ENCODE measurements at regions of chr20 and their contacts with region 1.

Region 1: GRCh38 chr20:19913927-19914614 is 103.1 kb upstream of the NAA20 start:
- DNase-seq: peak; percentile 97
- H3K4me3 ChIP-seq: no peak overlapping the region
- H3K27ac ChIP-seq: peak overlapping the region; percentile 94
- H3K4me1 ChIP-seq: peaks cover 35% of the 10 kb centered on the region
- H3K27me3 ChIP-seq: no peaks in the 10 kb centered on the region
- CTCF ChIP-seq: no peak

Region 2: GRCh38 chr20:19213946-19214490 is 700.1 kb before region 1 on chr20:
- CTCF ChIA-PET with region 1: no interaction called
- dilution Hi-C with region 1: no loop called
- in situ Hi-C with region 1: no loop called
- intact Hi-C with region 1: no loop called
- DNase-seq: no peak
- H3K4me3 ChIP-seq: no peak overlapping the region
- H3K27ac ChIP-seq: no peak overlapping the region
- H3K4me1 ChIP-seq: peaks cover 2% of the 10 kb centered on the region
- H3K27me3 ChIP-seq: peaks cover 30% of the 10 kb centered on the region
- CTCF ChIP-seq: no peak

Region 3: DNA sequence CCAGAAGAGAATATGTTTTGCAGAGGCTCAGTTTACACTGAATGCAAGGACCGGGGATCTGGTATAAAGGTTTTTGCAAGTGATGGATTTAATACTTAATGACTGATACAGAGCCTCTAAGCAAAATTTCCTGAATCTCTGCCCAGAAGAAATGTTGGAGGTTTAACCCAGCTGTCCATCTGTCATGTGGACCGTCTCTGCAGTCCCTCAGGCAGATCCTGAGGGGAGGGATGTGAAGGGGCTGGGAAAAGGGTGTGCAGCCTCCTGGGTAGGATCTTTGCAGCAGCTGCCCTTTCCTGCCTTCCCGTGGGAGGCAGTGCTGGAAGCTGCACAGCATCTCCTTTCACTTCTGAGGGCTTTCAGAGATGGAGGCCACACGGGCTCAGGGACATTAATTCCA is 494.7 kb before region 1 on chr20:
- CTCF ChIA-PET with region 1: no interaction called
- dilution Hi-C with region 1: no loop called
- in situ Hi-C with region 1: no loop called
- intact Hi-C with region 1: no loop called
- DNase-seq: no peak
- H3K4me3 ChIP-seq: no peak overlapping the region
- H3K27ac ChIP-seq: no peak overlapping the region
- H3K4me1 ChIP-seq: no peaks in the 10 kb centered on the region
- H3K27me3 ChIP-seq: no peaks in the 10 kb centered on the region
- CTCF ChIP-seq: no peak

Region 4: GRCh38 chr20:19571996-19572395 is 342.1 kb before region 1 on chr20:
- CTCF ChIA-PET with region 1: no interaction called
- dilution Hi-C with region 1: no loop called
- in situ Hi-C with region 1: no loop called
- intact Hi-C with region 1: no loop called
- DNase-seq: no peak
- H3K4me3 ChIP-seq: no peak overlapping the region
- H3K27ac ChIP-seq: no peak overlapping the region
- H3K4me1 ChIP-seq: no peaks in the 10 kb centered on the region
- H3K27me3 ChIP-seq: no peaks in the 10 kb centered on the region
- CTCF ChIP-seq: no peak

Region 5: DNA sequence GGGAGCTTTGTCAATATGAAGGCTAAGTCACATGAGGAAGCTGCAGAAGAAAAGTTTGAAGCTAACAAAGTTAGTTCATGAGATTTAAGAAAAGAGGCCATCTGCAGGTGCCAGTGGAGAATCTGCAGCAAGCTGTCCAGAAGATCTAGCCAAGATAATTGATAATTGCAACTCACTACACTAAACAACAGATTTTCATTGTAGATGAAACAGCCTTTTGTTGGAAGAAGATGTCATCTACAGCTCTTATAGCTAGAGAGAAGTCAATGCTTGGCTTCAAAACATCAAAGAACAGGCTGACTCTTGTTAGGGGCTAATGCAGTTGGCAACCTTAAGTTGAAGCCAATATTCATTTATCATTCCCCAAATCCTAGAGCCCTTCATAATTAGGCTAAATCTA is 72.3 kb before region 1 on chr20:
- CTCF ChIA-PET with region 1: no interaction called
- dilution Hi-C with region 1: no loop called
- in situ Hi-C with region 1: no loop called
- intact Hi-C with region 1: loop called (anchors 2 kb)
- DNase-seq: no peak
- H3K4me3 ChIP-seq: no peak overlapping the region
- H3K27ac ChIP-seq: no peak overlapping the region
- H3K4me1 ChIP-seq: peaks cover 5% of the 10 kb centered on the region
- H3K27me3 ChIP-seq: no peaks in the 10 kb centered on the region
- CTCF ChIP-seq: no peak

Region 6: GRCh38 chr20:19928328-19929011 is 14.4 kb after region 1 on chr20:
- CTCF ChIA-PET with region 1: no interaction called
- dilution Hi-C with region 1: no loop called
- in situ Hi-C with region 1: no loop called
- intact Hi-C with region 1: loop called (anchors 1 kb)
- DNase-seq: peak; percentile 97
- H3K4me3 ChIP-seq: no peak overlapping the region
- H3K27ac ChIP-seq: peak overlapping the region; percentile 80
- H3K4me1 ChIP-seq: peaks cover 26% of the 10 kb centered on the region
- H3K27me3 ChIP-seq: no peaks in the 10 kb centered on the region
- CTCF ChIP-seq: no peak

Region 7: DNA sequence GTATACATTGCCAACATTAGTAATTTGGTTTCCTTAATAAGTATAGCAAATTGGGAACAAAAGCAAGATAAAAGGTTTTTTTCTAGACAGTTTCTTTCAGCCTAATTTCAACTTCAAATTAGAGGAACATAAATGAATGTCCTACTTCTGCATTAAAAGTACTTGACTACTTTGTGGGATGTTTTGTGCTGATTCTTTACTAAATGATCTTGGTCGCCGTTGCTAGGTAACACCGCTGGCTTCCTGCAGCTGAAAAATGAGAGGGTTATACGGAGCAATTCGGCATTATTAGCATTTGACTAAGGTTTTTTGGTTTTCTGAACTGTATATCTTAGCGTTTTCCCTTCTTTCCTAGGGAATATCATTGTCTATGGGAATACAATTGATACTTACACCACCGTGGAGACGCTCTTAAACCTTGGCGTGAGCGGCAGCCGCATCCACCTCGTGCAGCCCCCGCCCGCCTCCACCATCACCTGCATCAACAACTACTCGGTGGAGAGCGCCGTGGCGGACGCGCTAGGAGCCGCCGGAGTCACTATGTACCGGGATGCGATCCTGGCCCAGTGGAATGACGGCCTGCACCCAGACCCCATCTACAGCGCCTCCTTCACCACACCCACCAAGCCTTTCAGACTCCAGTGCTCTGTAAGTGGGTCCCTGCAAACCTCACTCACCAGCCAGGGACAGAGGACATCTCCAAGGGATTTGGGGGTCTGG is 362.9 kb after region 1 on chr20:
- CTCF ChIA-PET with region 1: no interaction called
- dilution Hi-C with region 1: no loop called
- in situ Hi-C with region 1: no loop called
- intact Hi-C with region 1: no loop called
- DNase-seq: no peak
- H3K4me3 ChIP-seq: no peak overlapping the region
- H3K27ac ChIP-seq: no peak overlapping the region
- H3K4me1 ChIP-seq: no peaks in the 10 kb centered on the region
- H3K27me3 ChIP-seq: peaks cover 9% of the 10 kb centered on the region
- CTCF ChIP-seq: no peak

Measured in mammary epithelial cell (primary cell).